Activated CD8-positive, alpha-beta memory T cell treated with anti-CD3 and anti-CD28 coated beads, Interleukin-2, amount 10 ng/mL, durations not matched to agents 7 days and 5 days (primary cell): ENCODE measurements at regions of chr16 and their contacts with region 1.

Region 1: GRCh38 chr16:28846080-28846932 is at the start of gene TUFM:
- DNase-seq: peak; percentile 99
- ATAC-seq: peak; percentile 93
- H3K4me3 Mint-ChIP-seq: peak within 1 kb of the TSS; percentile 97
- H3K27ac Mint-ChIP-seq: peak within 1 kb of the TSS; percentile 96
- H3K4me1 Mint-ChIP-seq: peaks cover 31% of the 10 kb centered on the region
- H3K27me3 Mint-ChIP-seq: no peaks in the 10 kb centered on the region
- total RNA-seq, gene TUFM: 156 to 199 TPM

Region 2: GRCh38 chr16:28823872-28824716 is 22.2 kb before region 1 on chr16:
- CTCF ChIA-PET with region 1: interaction called, 22 read pairs
- DNase-seq: peak; percentile 99
- ATAC-seq: peak; percentile 79
- H3K4me3 Mint-ChIP-seq: peak overlapping the region; percentile 100
- H3K27ac Mint-ChIP-seq: peak overlapping the region; percentile 96
- H3K4me1 Mint-ChIP-seq: peaks cover 52% of the 10 kb centered on the region
- H3K27me3 Mint-ChIP-seq: no peaks in the 10 kb centered on the region

Region 3: GRCh38 chr16:28863929-28864793 is 17.9 kb after region 1 on chr16:
- CTCF ChIA-PET with region 1: interaction called, 45 read pairs
- DNase-seq: no peak
- ATAC-seq: no peak
- H3K4me3 Mint-ChIP-seq: peak overlapping the region; percentile 89
- H3K27ac Mint-ChIP-seq: peak overlapping the region; percentile 96
- H3K4me1 Mint-ChIP-seq: peaks cover 23% of the 10 kb centered on the region
- H3K27me3 Mint-ChIP-seq: no peaks in the 10 kb centered on the region

Region 4: DNA sequence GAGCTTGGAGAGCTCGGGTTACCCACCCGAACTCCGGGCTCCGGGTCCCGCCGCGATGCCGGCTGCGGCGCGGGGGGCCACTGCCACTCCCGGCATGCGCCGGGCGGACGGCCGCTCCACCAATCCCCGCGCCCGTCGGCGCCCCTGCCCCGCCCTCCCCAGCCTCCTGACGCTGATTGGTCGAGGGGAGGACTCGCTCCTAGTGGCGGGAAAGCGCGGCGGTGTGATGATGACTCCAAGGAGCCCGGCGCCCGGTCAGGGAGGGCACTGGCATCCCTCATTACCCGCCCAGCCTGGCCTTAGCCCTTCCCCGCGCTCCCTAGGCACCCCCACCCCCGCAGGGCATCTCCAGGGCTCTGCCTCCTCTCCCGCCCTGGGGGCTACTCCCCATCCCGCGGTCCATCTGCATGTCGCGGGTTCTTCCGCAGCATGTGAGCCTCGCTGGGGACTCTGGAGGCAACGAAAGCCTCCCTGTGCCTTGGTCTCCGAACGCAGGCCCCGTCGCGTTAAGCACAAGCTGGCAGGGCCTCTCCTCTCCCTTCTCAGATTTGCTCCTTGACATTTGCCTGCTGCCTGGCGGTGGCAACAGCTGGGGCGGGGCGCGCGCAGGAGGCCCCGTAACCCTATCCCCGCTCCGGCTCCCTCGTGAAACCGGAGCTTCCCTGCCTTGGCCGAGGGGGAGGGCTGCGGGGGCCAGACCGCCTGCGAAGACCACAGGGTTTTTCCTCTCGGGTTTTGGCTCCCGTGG is 33.7 kb after region 1 on chr16:
- CTCF ChIA-PET with region 1: interaction called, 12 read pairs
- DNase-seq: peak; percentile 96
- ATAC-seq: peak; percentile 98
- H3K4me3 Mint-ChIP-seq: peak overlapping the region; percentile 88
- H3K27ac Mint-ChIP-seq: peak overlapping the region; percentile 76
- H3K4me1 Mint-ChIP-seq: peaks cover 40% of the 10 kb centered on the region
- H3K27me3 Mint-ChIP-seq: peaks cover 3% of the 10 kb centered on the region

Region 5: GRCh38 chr16:28891964-28892890 is 45.9 kb after region 1 on chr16:
- CTCF ChIA-PET with region 1: no interaction called
- DNase-seq: no peak
- ATAC-seq: no peak
- H3K4me3 Mint-ChIP-seq: no peak overlapping the region
- H3K27ac Mint-ChIP-seq: peak overlapping the region; percentile 37
- H3K4me1 Mint-ChIP-seq: peaks cover 4% of the 10 kb centered on the region
- H3K27me3 Mint-ChIP-seq: no peaks in the 10 kb centered on the region